ENCODE measurements at regions of chr17 and their contacts with region 1.

Region 1: DNA sequence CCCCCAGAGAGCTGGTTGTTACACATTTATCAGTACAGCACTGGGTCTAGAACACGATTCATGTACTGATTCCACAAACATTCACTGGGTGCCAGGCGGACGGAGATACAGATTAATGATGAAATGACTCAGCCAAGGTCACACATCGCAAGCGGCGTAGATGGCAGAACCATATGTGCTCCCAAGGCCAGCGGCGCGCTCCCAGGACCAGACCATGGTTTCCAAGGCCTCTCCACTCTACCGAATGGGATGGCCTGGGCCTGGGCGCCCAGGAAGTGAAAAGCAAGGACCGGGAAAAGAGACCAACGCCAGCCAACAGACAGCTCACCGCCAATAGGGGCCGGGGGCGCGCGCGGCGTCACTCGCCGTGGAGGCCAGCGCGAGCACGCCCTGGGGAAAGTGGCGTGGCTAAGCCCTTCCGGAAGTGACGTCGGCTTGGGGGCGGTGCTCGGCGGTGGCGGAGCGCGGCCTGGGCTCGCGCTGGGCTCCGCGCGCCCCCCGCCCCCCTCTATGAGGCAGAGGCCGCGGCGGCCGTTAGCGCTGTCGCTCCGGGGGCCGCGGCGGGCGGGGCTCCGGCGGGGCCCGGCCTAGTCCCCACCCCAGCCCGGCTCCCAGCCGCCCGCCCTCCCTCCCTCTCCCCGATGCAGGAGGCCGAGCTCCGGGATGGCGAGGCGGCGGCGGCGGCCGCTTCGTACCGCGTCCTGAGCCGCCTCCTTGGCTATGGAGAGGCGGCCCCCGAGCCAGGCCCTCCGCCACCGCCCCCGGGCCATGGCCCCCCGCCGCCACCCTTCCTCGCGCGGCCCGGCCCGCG is at the start of gene SOCS7:
- DNase-seq: peak; percentile 89 to 94 (median 91)
- H3K4me3 ChIP-seq: peak within 1 kb of the TSS; percentile 96
- H3K4me3 Mint-ChIP-seq: peak within 1 kb of the TSS; percentile 89 to 100 (median 95)
- H3K27ac ChIP-seq: peak within 1 kb of the TSS; percentile 81
- H3K27ac Mint-ChIP-seq: peak within 1 kb of the TSS; percentile 64 to 100 (median 98)
- H3K4me1 ChIP-seq: peaks cover 26% of the 10 kb centered on the region
- H3K4me1 Mint-ChIP-seq: peaks cover 34 to 51% (median 43%) of the 10 kb centered on the region in 3 donors
- H3K27me3 ChIP-seq: no peaks in the 10 kb centered on the region
- H3K27me3 Mint-ChIP-seq: no peaks in the 10 kb centered on the region
- total RNA-seq, gene SOCS7: 22.0 to 23.7 TPM

Region 2: DNA sequence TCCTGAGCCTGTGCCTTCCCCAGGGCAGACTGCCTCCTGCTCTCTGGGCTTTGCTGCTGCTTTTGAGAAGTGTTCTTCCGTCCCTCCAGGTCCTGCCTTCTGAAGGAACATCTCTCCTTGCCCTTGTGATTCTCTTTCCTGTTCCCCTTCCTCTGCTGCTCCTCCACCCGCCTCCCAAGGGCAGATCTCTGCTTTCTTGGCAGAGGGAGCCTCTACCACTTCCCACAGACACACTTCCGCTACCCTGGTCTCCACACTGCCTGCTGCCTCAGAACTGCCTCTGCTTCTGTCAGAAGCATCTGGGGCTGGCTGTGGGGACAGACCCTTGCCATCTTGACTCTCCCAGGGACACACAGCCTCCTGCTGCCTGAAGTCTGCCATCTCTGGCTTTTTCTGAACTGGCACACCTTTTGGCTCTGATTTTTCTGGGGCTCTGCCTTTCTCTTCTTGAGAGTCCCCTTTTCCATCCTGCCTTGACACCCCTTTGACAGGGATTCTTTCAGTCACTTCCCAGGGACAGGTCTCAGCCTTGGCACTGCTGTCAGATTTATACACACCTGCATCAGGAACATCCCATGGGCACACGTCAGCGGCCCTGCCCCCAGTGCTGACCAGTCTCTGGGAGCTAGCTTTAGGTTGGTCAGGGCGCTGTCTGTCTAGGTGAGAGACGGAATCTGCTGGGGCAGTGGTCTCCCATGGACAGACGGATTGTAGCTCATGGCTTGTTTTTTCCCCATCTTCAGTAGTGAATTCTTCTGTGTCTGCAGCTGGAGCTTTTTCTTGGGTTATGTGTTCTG is 24.4 kb before region 1 on chr17:
- CTCF ChIA-PET with region 1: no interaction called
- POLR2A ChIA-PET with region 1: no interaction called
- DNase-seq: no peak
- H3K4me3 ChIP-seq: no peak overlapping the region
- H3K4me3 Mint-ChIP-seq: no peak overlapping the region
- H3K27ac ChIP-seq: no peak overlapping the region
- H3K27ac Mint-ChIP-seq: peak overlapping the region in 3 of 8 donors; percentile 17 to 84 (median 71)
- H3K4me1 ChIP-seq: no peaks in the 10 kb centered on the region
- H3K4me1 Mint-ChIP-seq: no peaks in the 10 kb centered on the region
- H3K27me3 ChIP-seq: peaks cover 5% of the 10 kb centered on the region
- H3K27me3 Mint-ChIP-seq: peaks cover 10 to 19% of the 10 kb centered on the region in 2 donors

Region 3: DNA sequence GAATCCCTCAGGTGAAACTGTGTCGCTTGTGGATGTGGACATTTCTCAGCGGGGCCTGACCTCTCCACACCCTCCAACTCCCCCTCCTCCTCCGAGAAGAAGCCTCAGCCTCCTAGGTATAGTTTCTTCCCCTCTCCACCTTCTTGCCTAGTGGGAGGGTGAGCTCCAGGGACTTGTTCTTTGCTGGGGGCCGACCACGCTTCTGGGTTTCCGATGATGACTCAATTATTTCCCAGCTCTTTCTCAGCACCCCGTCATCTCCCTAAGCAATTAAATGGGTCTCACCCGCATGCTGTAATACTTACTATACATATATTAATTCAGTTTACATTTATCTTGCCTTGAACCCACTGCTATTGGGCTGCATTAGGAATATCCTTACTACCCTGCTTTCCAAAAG is 13.1 kb after region 1 on chr17:
- CTCF ChIA-PET with region 1: interaction called, 18 read pairs
- POLR2A ChIA-PET with region 1: no interaction called
- DNase-seq: no peak
- H3K4me3 ChIP-seq: no peak overlapping the region
- H3K4me3 Mint-ChIP-seq: no peak overlapping the region
- H3K27ac ChIP-seq: no peak overlapping the region
- H3K27ac Mint-ChIP-seq: no peak overlapping the region
- H3K4me1 ChIP-seq: no peaks in the 10 kb centered on the region
- H3K4me1 Mint-ChIP-seq: peaks cover 0 to 4% (median 0%) of the 10 kb centered on the region in 3 donors
- H3K27me3 ChIP-seq: no peaks in the 10 kb centered on the region
- H3K27me3 Mint-ChIP-seq: no peaks in the 10 kb centered on the region

Region 4: GRCh38 chr17:38591759-38592241 is 240.2 kb after region 1 on chr17:
- CTCF ChIA-PET with region 1: no interaction called
- POLR2A ChIA-PET with region 1: no interaction called
- DNase-seq: peak in 1 of 5 donors; percentile 30
- H3K4me3 ChIP-seq: no peak overlapping the region
- H3K4me3 Mint-ChIP-seq: peak overlapping the region in 6 of 7 donors; percentile 47 to 84 (median 57)
- H3K27ac ChIP-seq: no peak overlapping the region
- H3K27ac Mint-ChIP-seq: peak overlapping the region in 3 of 8 donors; percentile 33 to 63 (median 36)
- H3K4me1 ChIP-seq: peaks cover 20% of the 10 kb centered on the region
- H3K4me1 Mint-ChIP-seq: peaks cover 22 to 32% (median 29%) of the 10 kb centered on the region in 3 donors
- H3K27me3 ChIP-seq: peaks cover 57% of the 10 kb centered on the region
- H3K27me3 Mint-ChIP-seq: peaks cover 50 to 85% of the 10 kb centered on the region in 2 donors